ENCODE measurements at regions of chr17 and their contacts with region 1.

Region 1: DNA sequence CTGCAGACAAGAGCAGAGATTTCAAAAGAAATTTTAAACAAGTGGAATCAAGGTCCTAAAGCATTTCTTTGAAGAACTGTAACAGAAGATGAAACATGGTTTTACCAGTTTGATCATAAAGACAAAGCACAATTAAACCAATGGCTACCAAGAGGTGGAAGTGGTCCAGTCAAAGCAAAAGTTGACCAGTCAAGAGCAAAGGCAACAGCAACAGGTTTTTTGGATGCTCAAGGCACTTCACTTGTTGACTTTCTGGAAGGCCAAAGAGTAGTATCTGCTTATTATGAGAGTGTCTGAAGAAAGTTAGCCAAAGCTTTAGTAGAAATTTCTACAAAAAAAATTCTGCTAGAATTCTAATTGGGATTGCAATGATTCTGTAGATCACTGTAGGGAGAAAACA is 5.3 kb downstream of the DDX52 start:
- DNase-seq: no peak
- H3K4me3 ChIP-seq: no peak overlapping the region
- H3K27ac ChIP-seq: no peak overlapping the region
- H3K4me1 ChIP-seq: peaks cover 0 to 36% (median 19%) of the 10 kb centered on the region in 4 donors
- H3K27me3 ChIP-seq: no peaks in the 10 kb centered on the region
- CTCF ChIP-seq: no peak
- EP300 ChIP-seq: no peak
- POLR2A ChIP-seq: no peak

Region 2: DNA sequence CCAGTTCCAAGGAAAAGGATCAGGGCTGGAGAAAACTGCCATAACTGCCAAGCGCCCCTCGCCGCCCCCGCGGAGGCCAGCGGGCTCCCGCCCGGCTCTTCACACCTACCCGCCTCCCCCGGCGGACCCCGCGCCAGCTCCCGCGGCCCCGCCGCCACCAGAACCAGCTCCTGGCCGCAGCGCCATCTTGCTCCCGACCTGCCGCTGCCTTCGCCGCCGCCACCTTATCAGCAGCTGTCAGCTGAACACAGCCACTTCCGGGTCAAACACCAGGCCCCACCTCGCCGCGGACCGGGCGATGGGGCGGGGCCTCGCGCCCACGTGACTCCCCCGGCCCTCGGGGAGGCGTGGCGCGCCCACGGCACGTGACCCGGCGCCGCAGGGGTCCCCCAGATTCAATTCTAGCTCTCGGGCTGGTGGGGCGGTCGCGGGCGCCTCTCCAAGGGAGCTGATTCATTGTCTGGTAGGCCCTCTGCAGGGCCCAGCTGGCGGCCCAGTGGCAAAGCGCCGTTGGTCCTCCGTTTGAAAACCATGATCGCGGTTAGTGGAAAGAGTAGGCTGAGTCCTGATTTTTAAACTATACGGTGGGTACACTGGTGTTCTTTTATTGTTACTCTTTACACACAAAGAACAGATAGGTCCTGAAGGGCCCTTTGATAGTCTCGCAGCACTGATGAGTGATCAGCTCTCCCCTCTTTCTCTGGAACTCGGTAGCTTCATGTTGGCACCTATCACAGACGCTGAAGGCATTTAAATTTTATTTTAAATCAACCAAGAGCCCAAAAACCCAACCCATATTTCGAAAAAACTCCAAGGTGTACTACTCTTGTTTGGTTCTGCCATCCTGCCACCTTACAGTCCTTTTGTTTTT is 28.6 kb before region 1 on chr17 and contains the start of gene SYNRG:
- in situ Hi-C with region 1: no loop called
- intact Hi-C with region 1: loop called (anchors 1 kb)
- DNase-seq: peak; percentile 95
- H3K4me3 ChIP-seq: peak within 1 kb of the TSS; percentile 88 to 100 (median 98)
- H3K27ac ChIP-seq: peak within 1 kb of the TSS; percentile 94 to 98 (median 96)
- H3K4me1 ChIP-seq: peaks cover 0 to 33% (median 16%) of the 10 kb centered on the region in 4 donors
- H3K27me3 ChIP-seq: no peaks in the 10 kb centered on the region
- CTCF ChIP-seq: peak; percentile 18 to 34 (median 25)
- EP300 ChIP-seq: no peak
- POLR2A ChIP-seq: peak; percentile 86
- total RNA-seq, gene SYNRG: 30.2 to 151 (median 56.7) TPM